WTC11 (cell line): ENCODE measurements at regions of chr17 and their contacts with region 1.

Region 1: GRCh38 chr17:63478791-63479494 is 2.1 kb downstream of the ACE start:
- DNase-seq: peak; percentile 92
- ATAC-seq: peak; percentile 75
- H3K4me3 Mint-ChIP-seq: peak overlapping the region; percentile 14; the same call in 1 of the 2 replicates
- H3K27ac Mint-ChIP-seq: no peak overlapping the region
- H3K4me1 Mint-ChIP-seq: peaks cover 32% of the 10 kb centered on the region
- H3K27me3 Mint-ChIP-seq: peaks cover 28% of the 10 kb centered on the region
- CTCF ChIP-seq: peak; percentile 52; the same call in 1 of the 2 replicates

Region 2: DNA sequence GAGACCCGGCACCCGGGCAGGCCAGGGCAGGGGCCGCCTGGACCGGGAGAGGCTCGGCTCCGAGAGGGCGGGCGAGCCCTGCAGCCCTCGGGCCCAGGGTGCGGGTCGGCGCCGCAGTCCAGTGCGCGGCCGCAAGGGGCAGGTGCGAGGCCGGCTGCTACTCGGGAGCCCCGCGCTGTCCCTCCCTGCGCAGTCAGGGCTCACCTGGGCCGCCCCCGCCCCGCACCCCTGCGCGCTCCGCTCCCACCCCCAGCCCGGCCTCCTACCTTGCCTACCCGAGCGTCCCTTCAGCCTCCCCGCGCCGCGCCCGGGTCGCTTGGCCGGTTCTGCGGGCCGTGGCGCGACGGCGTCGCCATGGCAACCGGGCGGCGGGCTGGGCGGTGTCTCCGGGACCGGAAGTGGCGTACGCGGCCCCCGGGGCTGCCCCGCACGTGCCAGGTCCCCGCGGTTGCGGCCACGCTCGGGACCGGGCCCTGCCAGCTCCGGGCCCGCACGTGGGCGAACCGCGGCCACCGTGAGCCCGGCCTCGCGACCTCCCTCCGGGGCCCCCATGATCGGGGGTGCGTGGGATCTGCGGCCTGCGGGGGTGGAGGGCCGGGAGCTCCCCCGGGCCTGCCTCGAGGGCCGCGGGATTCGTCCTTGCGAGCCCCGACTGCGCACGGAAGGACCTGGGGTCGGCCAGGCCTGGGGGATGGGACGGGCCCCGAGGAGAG is 32.8 kb before region 1 on chr17 and contains the start of gene CYB561:
- CTCF ChIA-PET with region 1: interaction called, 298 read pairs
- POLR2A ChIA-PET with region 1: interaction called, 4 read pairs
- DNase-seq: peak; percentile 76
- ATAC-seq: peak; percentile 80
- H3K4me3 Mint-ChIP-seq: peak within 1 kb of the TSS; percentile 64
- H3K27ac Mint-ChIP-seq: peak within 1 kb of the TSS; percentile 74; the same call in 1 of the 2 replicates
- H3K4me1 Mint-ChIP-seq: peaks cover 32% of the 10 kb centered on the region
- H3K27me3 Mint-ChIP-seq: peaks cover 5% of the 10 kb centered on the region
- CTCF ChIP-seq: peak; percentile 62
- total RNA-seq, gene CYB561: 27.0 to 35.1 TPM (median 28.7 TPM) in 3 replicates

Region 3: DNA sequence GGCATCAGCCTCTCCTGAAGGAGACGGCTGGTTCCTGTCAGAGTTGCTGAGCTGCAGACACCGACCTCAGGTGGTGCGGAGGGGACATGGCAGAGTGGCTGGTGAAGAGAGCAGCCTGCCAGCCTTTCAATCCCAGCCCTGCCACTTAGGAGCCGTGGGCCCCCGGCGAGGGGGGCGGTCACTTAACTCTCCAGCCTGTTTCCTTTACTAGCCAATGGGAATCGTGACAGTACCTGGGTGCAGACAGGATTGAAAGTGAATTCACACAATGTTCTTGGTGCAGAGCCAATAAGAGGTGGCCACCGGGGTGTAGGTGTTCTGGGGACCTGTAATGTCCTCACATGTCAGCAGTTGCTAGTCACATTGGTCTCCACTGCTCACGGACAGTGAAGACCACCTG is 11.4 kb after region 1 on chr17:
- CTCF ChIA-PET with region 1: interaction called, 16 read pairs
- POLR2A ChIA-PET with region 1: no interaction called
- DNase-seq: no peak
- ATAC-seq: peak; percentile 72
- H3K4me3 Mint-ChIP-seq: no peak overlapping the region
- H3K27ac Mint-ChIP-seq: no peak overlapping the region; the same call in 1 of the 2 replicates
- H3K4me1 Mint-ChIP-seq: no peaks in the 10 kb centered on the region
- H3K27me3 Mint-ChIP-seq: no peaks in the 10 kb centered on the region
- CTCF ChIP-seq: no peak

Region 4: DNA sequence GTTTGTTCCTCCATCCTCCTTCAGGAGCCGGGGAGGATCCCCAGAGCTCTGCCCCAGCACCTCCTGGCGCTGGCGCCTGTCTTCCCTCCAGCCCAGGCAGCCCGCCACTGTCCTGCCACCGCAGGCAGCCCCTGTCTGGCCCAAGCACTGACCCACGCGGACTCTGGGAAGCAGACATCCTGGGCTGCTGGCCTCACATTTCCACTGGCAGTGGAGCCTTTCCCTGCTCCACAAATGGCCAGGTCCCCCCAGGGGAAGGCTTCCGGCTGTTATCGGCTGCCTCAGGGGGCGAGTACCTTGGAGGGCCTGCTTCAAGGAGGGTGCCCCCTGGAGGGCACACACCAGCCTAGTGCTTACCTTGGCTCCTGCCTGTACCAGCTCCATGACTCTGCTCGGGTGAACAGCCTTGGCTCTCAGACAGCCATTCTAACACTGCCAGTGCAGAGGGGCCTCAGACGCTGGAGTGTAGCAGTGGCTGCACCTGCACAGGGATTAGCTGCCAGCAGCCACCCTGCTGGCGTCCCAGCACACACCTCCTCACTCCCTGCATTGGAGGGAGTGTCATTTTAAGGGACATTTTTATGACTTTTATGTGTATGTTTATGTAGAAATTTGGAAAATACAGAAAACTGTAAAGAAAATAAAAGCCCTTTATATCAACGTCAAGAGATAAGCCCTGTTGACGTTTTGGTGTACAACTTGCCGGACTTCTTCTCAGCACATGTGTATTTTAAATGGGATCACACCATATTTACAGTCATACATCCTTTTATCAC is 19.0 kb after region 1 on chr17:
- CTCF ChIA-PET with region 1: interaction called, 30 read pairs
- POLR2A ChIA-PET with region 1: no interaction called
- DNase-seq: peak; percentile 72
- ATAC-seq: peak; percentile 94
- H3K4me3 Mint-ChIP-seq: no peak overlapping the region
- H3K27ac Mint-ChIP-seq: 0 out of 2 replicates have a peak overlapping the region, but pooled peaks have one; percentile 36
- H3K4me1 Mint-ChIP-seq: peaks cover 8% of the 10 kb centered on the region
- H3K27me3 Mint-ChIP-seq: no peaks in the 10 kb centered on the region; the same call in 1 of the 2 replicates
- CTCF ChIP-seq: no peak

Region 5: GRCh38 chr17:63523253-63523855 is 44.4 kb after region 1 on chr17 and contains the start of gene KCNH6:
- CTCF ChIA-PET with region 1: interaction called, 10 read pairs
- POLR2A ChIA-PET with region 1: no interaction called
- DNase-seq: no peak
- ATAC-seq: peak; percentile 11
- H3K4me3 Mint-ChIP-seq: peak within 1 kb of the TSS; percentile 67
- H3K27ac Mint-ChIP-seq: no peak within 1 kb of the TSS; the same call in 1 of the 2 replicates
- H3K4me1 Mint-ChIP-seq: peaks cover 34% of the 10 kb centered on the region
- H3K27me3 Mint-ChIP-seq: peaks cover 4% of the 10 kb centered on the region
- CTCF ChIP-seq: no peak
- total RNA-seq, gene KCNH6: 2.1 to 2.4 TPM (median 2.3 TPM) in 3 replicates

Region 6: GRCh38 chr17:63571763-63572271 is 92.9 kb after region 1 on chr17:
- CTCF ChIA-PET with region 1: interaction called, 11 read pairs
- POLR2A ChIA-PET with region 1: no interaction called
- DNase-seq: no peak
- ATAC-seq: no peak
- H3K4me3 Mint-ChIP-seq: no peak overlapping the region
- H3K27ac Mint-ChIP-seq: peak overlapping the region; percentile 35; the same call in 1 of the 2 replicates
- H3K4me1 Mint-ChIP-seq: no peaks in the 10 kb centered on the region
- H3K27me3 Mint-ChIP-seq: no peaks in the 10 kb centered on the region
- CTCF ChIP-seq: no peak